CD8-positive, alpha-beta T cell (primary cell): ENCODE measurements at regions of chr6 and their contacts with region 1.

Region 1: DNA sequence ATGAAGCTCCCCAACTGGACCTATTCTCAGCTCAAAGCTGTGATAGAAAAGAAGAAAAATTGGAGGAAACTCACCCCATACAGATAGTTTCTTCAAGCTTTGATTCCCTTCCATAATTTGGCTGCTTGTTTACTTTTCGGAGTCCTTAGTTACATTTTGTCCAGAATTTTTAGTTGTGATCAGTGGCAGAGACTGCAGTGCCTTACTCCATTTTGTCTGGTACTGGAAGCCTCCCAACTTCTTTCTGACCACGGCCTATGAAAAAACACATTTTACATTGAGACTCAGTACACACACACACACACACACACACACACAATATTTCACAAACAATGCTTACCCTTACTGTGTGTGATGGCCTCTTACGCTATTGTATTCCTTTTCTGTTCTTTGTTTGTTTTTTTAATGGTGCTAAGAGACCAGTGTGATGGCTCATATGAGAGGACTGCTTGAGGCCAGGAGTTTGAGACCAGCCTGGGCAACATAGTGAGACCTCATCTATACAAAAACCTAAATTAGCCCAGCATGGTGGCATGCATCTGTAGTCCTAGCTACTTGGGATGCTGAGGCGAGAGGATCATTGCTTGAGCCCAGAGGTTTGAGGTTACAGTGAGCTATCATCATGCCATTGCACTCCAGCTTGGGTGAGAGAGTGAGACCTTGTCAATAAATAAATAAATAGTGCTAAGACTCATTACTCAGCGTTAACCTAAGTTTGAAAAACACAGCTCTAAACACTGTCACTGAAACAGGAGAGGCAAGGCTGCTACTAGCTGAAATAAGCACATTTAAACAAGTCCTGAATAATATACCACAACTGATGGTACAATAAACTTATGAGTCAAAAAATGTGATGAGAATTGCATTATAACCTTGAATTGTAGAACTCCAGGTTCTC is 13.8 kb upstream of the RNF8 start:
- DNase-seq: no peak
- ATAC-seq: no peak
- H3K4me3 ChIP-seq: no peak overlapping the region
- H3K4me3 Mint-ChIP-seq: no peak overlapping the region
- H3K27ac ChIP-seq: no peak overlapping the region
- H3K27ac Mint-ChIP-seq: no peak overlapping the region
- H3K4me1 ChIP-seq: no peaks in the 10 kb centered on the region
- H3K4me1 Mint-ChIP-seq: no peaks in the 10 kb centered on the region
- H3K27me3 ChIP-seq: no peaks in the 10 kb centered on the region
- H3K27me3 Mint-ChIP-seq: peaks cover 6% of the 10 kb centered on the region
- CTCF ChIP-seq: no peak

Region 2: GRCh38 chr6:37324131-37325033 is 15.6 kb before region 1 on chr6:
- CTCF ChIA-PET with region 1: interaction called, 16 read pairs
- POLR2A ChIA-PET with region 1: no interaction called
- intact Hi-C with region 1: no loop called
- DNase-seq: no peak
- ATAC-seq: no peak
- H3K4me3 ChIP-seq: no peak overlapping the region
- H3K4me3 Mint-ChIP-seq: no peak overlapping the region
- H3K27ac ChIP-seq: no peak overlapping the region
- H3K27ac Mint-ChIP-seq: no peak overlapping the region
- H3K4me1 ChIP-seq: no peaks in the 10 kb centered on the region
- H3K4me1 Mint-ChIP-seq: no peaks in the 10 kb centered on the region
- H3K27me3 ChIP-seq: no peaks in the 10 kb centered on the region
- H3K27me3 Mint-ChIP-seq: no peaks in the 10 kb centered on the region
- CTCF ChIP-seq: no peak

Region 3: GRCh38 chr6:38750968-38751615 is 1411.1 kb after region 1 on chr6:
- CTCF ChIA-PET with region 1: no interaction called
- POLR2A ChIA-PET with region 1: no interaction called
- intact Hi-C with region 1: no loop called
- DNase-seq: no peak
- ATAC-seq: no peak
- H3K4me3 ChIP-seq: no peak overlapping the region
- H3K4me3 Mint-ChIP-seq: no peak overlapping the region
- H3K27ac ChIP-seq: no peak overlapping the region
- H3K27ac Mint-ChIP-seq: no peak overlapping the region
- H3K4me1 ChIP-seq: no peaks in the 10 kb centered on the region
- H3K4me1 Mint-ChIP-seq: no peaks in the 10 kb centered on the region
- H3K27me3 ChIP-seq: no peaks in the 10 kb centered on the region
- H3K27me3 Mint-ChIP-seq: peaks cover 18% of the 10 kb centered on the region
- CTCF ChIP-seq: no peak